OCI-LY7 (cell line): ENCODE measurements at regions of chr11 and their contacts with region 1.

Region 1: GRCh38 chr11:44826922-44827643 is 100.3 kb downstream of the TSPAN18 start:
- DNase-seq: no peak
- H3K4me3 ChIP-seq: no peak overlapping the region
- H3K27ac ChIP-seq: no peak overlapping the region
- H3K4me1 ChIP-seq: no peaks in the 10 kb centered on the region
- CTCF ChIP-seq: no peak

Region 2: GRCh38 chr11:45590743-45591142 is 763.7 kb after region 1 on chr11:
- CTCF ChIA-PET with region 1: no interaction called
- POLR2A ChIA-PET with region 1: interaction called, 10 read pairs
- intact Hi-C with region 1: no loop called
- DNase-seq: no peak
- H3K4me3 ChIP-seq: no peak overlapping the region
- H3K27ac ChIP-seq: no peak overlapping the region
- H3K4me1 ChIP-seq: no peaks in the 10 kb centered on the region
- CTCF ChIP-seq: no peak